Left ventricle myocardium superior (tissue), 1 donor: ENCODE measurements at regions of chr2 and their contacts with region 1.

Region 1: DNA sequence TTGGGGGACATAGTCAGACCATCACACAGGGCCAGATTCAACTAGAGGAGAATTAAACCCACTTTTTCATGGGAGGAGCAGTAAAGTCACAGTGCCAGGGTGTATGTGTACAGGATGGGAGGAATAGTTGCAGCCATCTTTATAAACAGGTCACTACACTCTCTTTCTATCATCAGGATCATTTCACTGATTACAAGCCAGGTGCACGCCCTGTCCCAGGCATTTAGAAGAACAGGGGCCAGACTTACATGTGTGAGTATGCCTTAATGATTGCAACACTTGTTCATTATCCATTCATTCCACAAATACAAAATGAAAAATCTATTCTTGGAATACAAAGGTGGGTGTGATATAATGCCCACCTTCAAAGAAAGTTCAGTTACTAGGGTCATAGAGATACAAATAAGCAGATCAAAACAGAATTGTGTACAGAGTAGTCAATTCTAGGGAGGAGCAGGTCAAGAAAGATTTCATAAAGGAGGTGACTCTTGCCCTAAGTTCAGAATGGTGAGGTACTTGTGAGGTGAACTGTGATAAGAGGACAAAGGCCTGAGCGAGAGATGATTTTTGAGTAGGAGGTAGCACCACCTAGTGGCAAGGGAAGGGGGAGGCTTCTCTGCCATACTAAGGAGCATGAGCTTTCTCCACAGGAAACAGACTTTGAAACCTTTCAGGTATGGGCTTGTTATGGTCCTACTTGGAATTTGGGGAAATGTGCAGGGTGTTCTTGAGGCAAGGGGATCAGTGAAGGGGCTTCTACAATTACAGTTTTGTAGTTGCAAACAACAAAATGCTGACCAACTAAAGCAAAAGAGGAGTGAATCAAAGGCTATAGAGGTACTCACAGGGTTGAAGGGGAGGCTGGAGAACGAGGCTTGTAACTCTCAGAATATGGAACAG is 156.3 kb downstream of the SUCLG1 start:
- DNase-seq: no peak
- ATAC-seq: peak; percentile 54

Region 2: GRCh38 chr2:84022810-84023431 is 279.8 kb before region 1 on chr2:
- intact Hi-C with region 1: loop called (anchors 5 kb)
- DNase-seq: no peak
- ATAC-seq: no peak

Region 3: GRCh38 chr2:84383271-84383670 is 80.5 kb after region 1 on chr2:
- intact Hi-C with region 1: no loop called
- DNase-seq: no peak
- ATAC-seq: no peak